ENCODE measurements at regions of chr7 and their contacts with region 1.

Region 1: GRCh38 chr7:135170274-135170997 is at the start of gene CYREN:
- DNase-seq: peak; percentile 92
- H3K4me3 ChIP-seq: peak within 1 kb of the TSS; percentile 47 to 75 (median 66)
- H3K27ac ChIP-seq: peak within 1 kb of the TSS; percentile 63
- H3K4me1 ChIP-seq: peaks cover 23% of the 10 kb centered on the region
- H3K27me3 ChIP-seq: no peaks in the 10 kb centered on the region
- CTCF ChIP-seq: peak; percentile 69 to 78
- POLR2A ChIP-seq: peak; percentile 13
- total RNA-seq, gene CYREN: 26.8 and 30.8 TPM in 2 replicates

Region 2: DNA sequence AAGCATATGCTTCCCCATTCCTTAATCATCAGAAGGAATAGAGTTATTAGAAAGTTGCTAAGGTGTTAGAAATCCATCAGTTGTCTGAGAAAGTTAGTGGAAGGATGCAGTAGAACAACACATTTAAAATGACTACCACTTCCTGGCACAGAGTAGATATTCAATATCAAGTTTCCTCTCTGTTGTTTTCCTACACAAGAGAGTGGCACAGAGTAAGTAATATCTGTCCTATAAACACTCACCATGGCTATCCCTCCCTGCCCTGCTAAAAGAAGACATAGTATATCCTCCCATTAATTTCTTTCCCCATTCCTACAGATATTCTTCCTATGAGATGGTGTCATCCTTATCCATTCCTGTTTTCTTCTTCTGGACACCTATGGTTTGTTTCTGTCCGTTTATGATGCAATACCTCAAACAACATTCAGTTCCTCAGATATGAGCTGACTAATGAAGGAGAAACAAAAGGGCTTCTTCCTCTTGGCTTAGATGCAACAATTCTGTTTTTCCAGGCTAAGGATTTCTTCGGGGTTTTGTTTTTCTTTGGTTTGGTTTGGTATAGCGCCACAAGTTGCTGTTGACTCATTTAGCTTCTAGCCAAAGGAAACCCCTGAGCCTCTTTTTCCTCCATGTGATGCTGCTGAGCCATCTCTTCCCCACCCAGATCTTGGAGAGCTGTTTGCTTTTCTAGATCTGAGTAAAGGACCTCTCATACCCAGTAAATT is 556.7 kb before region 1 on chr7:
- CTCF ChIA-PET with region 1: no interaction called
- POLR2A ChIA-PET with region 1: no interaction called
- dilution Hi-C with region 1: no loop called
- intact Hi-C with region 1: loop called (anchors 5 kb)
- DNase-seq: peak; percentile 99
- H3K4me3 ChIP-seq: peak overlapping the region in 1 of 3 experiments; percentile 3
- H3K27ac ChIP-seq: peak overlapping the region; percentile 85
- H3K4me1 ChIP-seq: peaks cover 28% of the 10 kb centered on the region
- H3K27me3 ChIP-seq: no peaks in the 10 kb centered on the region
- CTCF ChIP-seq: no peak
- POLR2A ChIP-seq: peak; percentile 64

Region 3: GRCh38 chr7:134966681-134967080 is 203.8 kb before region 1 on chr7:
- CTCF ChIA-PET with region 1: interaction called, 5 read pairs
- POLR2A ChIA-PET with region 1: no interaction called
- dilution Hi-C with region 1: no loop called
- intact Hi-C with region 1: loop called (anchors 5 kb)
- DNase-seq: no peak
- H3K4me3 ChIP-seq: no peak overlapping the region
- H3K27ac ChIP-seq: no peak overlapping the region
- H3K4me1 ChIP-seq: no peaks in the 10 kb centered on the region
- H3K27me3 ChIP-seq: no peaks in the 10 kb centered on the region
- CTCF ChIP-seq: no peak
- POLR2A ChIP-seq: no peak

Region 4: DNA sequence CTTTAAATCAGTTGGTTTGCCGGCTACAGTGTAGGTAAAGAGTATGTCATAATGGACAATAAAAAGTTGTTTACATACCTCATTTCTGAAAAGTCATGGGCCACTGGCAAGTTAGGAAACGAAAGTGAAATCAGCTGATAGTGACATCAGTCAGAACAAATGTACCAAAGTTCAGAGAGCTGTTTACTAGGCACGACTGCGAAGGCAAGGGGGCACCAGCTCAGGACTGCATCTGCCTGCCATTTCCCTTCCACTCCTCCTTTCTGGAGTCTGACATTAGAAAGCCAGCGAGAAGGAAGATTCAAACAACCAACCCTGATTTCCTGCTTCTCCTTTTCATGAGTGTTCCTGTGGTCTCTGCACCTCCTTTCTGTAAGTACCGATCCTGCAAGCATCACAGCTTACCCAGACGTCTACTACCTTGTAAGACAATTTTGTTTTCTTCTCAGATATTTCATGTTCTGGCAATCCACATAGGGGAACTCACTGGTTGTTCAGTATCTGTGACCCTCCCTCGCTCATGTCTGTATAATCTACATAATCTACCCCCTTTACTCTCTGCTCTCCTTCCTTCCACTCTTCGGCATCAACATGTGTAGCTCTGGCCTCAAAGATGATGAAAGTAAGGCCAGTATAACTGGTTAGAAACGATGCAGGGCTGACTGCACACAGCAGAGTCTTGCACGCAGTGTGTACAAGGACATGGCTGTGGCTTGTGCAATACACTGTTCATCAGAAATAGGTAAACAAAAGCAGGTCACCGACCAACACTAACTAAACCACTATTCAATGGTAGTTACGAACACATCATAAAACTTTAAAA is 22.3 kb before region 1 on chr7 and contains the start of gene TMEM140:
- CTCF ChIA-PET with region 1: interaction called, 11 read pairs
- POLR2A ChIA-PET with region 1: interaction called, 3 read pairs
- dilution Hi-C with region 1: no loop called
- intact Hi-C with region 1: loop called (anchors 2 kb)
- DNase-seq: peak; percentile 92
- H3K4me3 ChIP-seq: peak within 1 kb of the TSS; percentile 18 to 57 (median 46)
- H3K27ac ChIP-seq: peak within 1 kb of the TSS; percentile 81
- H3K4me1 ChIP-seq: peaks cover 52% of the 10 kb centered on the region
- H3K27me3 ChIP-seq: no peaks in the 10 kb centered on the region
- CTCF ChIP-seq: no peak
- POLR2A ChIP-seq: no peak
- total RNA-seq, gene TMEM140: 15.7 and 26.5 TPM in 2 replicates

Region 5: DNA sequence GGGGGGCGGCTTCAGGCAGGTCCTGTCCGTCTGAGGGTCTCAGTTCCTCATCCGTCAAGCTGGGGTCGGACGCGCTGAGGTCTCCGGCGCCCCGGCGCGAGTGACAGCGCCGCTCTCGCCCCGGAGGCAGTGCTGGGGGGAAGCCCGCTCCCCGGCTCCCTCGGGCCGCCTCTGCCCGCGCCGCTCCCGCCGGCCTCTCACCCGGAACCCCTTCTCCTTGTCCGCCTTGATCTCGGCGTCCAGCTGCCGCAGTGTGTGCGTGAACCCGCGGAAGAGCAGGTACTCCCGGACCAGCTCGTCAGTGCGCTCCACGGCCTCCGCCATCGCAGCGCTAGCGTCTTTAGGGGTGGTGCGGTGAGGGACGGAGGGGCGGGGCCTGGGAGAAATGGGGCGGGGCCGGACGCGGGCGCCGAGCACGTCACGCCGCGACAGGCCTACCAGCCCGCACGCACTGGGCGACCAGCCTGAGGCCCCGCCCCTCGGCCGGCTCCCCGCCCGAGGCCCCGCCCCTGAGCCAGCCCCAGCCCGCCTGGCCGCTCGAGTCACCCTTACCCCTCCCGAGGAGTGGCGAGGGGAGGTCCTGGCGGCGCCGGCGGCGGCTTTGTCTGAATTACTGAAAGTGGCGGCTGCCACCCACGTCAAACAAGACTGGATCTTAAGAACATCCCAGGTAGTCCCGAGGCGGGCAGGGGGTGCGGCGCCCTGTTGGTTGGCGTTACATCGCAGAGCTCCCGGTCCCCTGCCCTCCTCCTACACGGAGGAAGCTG is 40.9 kb after region 1 on chr7 and contains the start of gene WDR91:
- CTCF ChIA-PET with region 1: interaction called, 8 read pairs
- POLR2A ChIA-PET with region 1: no interaction called
- dilution Hi-C with region 1: no loop called
- intact Hi-C with region 1: loop called (anchors 1 kb)
- DNase-seq: peak; percentile 97
- H3K4me3 ChIP-seq: peak within 1 kb of the TSS; percentile 86 to 94 (median 91)
- H3K27ac ChIP-seq: peak within 1 kb of the TSS; percentile 93
- H3K4me1 ChIP-seq: peaks cover 8% of the 10 kb centered on the region
- H3K27me3 ChIP-seq: no peaks in the 10 kb centered on the region
- CTCF ChIP-seq: no peak
- POLR2A ChIP-seq: peak; percentile 77
- total RNA-seq, gene WDR91: 7.0 and 9.8 TPM in 2 replicates